ENCODE measurements at regions of chr5 and their contacts with region 1.

Region 1: DNA sequence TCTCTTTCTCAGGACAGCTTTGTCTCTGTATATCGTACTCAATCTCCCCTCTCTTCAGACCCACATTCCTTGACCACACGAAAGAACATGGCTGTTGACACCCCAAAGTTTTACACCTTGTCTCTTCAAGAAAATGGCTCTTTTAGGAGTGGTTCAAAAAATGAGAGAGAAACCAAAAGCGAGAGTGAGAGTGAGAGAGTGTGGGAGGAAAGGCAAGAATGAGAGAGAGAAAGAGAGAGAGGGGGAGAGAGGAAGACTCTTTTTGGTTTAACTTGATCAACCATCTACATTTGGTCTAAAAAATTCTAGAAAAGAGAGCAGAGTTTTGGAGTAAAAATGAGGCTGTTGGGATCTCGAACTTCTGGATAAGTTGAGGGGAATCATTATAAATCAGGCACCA is 581.8 kb upstream of the WWC1 start:
- DNase-seq: no peak
- H3K4me3 ChIP-seq: no peak overlapping the region
- H3K4me3 Mint-ChIP-seq: no peak overlapping the region
- H3K27ac Mint-ChIP-seq: no peak overlapping the region
- H3K4me1 ChIP-seq: peaks cover 29% of the 10 kb centered on the region
- H3K4me1 Mint-ChIP-seq: no peaks in the 10 kb centered on the region
- H3K27me3 ChIP-seq: no peaks in the 10 kb centered on the region
- H3K27me3 Mint-ChIP-seq: no peaks in the 10 kb centered on the region
- CTCF ChIP-seq: no peak

Region 2: DNA sequence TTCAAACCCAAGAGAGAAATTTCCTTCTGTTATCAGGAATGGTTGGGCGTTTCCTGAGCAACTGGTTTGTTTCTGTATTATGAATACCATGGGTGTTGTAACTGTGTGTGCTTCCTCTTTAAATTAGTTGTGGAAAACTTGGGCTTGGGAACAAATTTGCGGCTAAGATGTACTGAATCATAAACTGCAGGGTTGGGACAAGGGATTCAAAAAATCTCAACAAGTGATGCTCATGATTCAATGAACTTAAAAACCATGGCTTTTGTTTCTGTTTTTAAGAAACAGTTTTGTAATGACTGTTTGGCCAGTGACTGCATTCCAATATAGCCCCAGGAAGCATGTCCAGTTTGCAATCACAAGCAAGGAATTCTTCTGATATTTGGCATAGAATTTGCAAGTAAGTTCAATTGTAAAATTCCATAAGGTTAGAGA is 75.7 kb before region 1 on chr5:
- CTCF ChIA-PET with region 1: no interaction called
- POLR2A ChIA-PET with region 1: no interaction called
- intact Hi-C with region 1: loop called (anchors 2 kb)
- DNase-seq: no peak
- H3K4me3 ChIP-seq: no peak overlapping the region
- H3K4me3 Mint-ChIP-seq: no peak overlapping the region
- H3K27ac Mint-ChIP-seq: no peak overlapping the region
- H3K4me1 ChIP-seq: 0 out of 2 replicates have a peak, but pooled peaks cover 7% of the 10 kb centered on the region
- H3K4me1 Mint-ChIP-seq: peaks cover 6% of the 10 kb centered on the region
- H3K27me3 ChIP-seq: no peaks in the 10 kb centered on the region
- H3K27me3 Mint-ChIP-seq: no peaks in the 10 kb centered on the region
- CTCF ChIP-seq: no peak

Region 3: GRCh38 chr5:167699434-167699833 is 10.2 kb before region 1 on chr5:
- CTCF ChIA-PET with region 1: interaction called, 3 read pairs
- POLR2A ChIA-PET with region 1: interaction called, 3 read pairs
- intact Hi-C with region 1: loop called (anchors 1 kb)
- DNase-seq: peak; percentile 80 to 85
- H3K4me3 ChIP-seq: no peak overlapping the region
- H3K4me3 Mint-ChIP-seq: peak overlapping the region; percentile 53
- H3K27ac Mint-ChIP-seq: peak overlapping the region; percentile 95
- H3K4me1 ChIP-seq: peaks cover 25% of the 10 kb centered on the region
- H3K4me1 Mint-ChIP-seq: peaks cover 24% of the 10 kb centered on the region
- H3K27me3 ChIP-seq: no peaks in the 10 kb centered on the region
- H3K27me3 Mint-ChIP-seq: no peaks in the 10 kb centered on the region
- CTCF ChIP-seq: no peak

Region 4: DNA sequence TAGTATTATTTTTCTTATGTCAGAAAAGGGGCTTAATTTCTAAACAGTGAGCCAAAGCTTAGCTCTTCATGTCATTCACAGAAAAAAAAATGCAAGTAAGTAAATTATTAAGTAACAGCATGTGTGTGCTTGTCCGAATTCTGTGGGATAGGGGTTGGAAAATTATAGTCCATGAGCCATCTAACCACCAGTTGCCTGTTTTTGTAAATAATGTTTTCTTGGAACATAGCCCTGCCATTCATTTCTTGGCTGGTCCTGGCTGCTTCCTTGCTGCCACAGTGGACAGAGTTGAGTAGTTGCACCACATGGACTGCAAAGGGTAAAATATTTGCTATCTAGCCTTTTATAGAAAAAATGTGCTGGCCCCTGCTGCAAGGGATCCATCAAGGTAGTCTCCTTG is 68.1 kb after region 1 on chr5:
- CTCF ChIA-PET with region 1: no interaction called
- POLR2A ChIA-PET with region 1: no interaction called
- intact Hi-C with region 1: no loop called
- DNase-seq: no peak
- H3K4me3 ChIP-seq: no peak overlapping the region
- H3K4me3 Mint-ChIP-seq: no peak overlapping the region
- H3K27ac Mint-ChIP-seq: no peak overlapping the region
- H3K4me1 ChIP-seq: no peaks in the 10 kb centered on the region
- H3K4me1 Mint-ChIP-seq: no peaks in the 10 kb centered on the region
- H3K27me3 ChIP-seq: no peaks in the 10 kb centered on the region
- H3K27me3 Mint-ChIP-seq: no peaks in the 10 kb centered on the region
- CTCF ChIP-seq: no peak

Measured in Caco-2 (cell line).